Left ventricle myocardium superior (tissue), 1 donor: ENCODE measurements at regions of chr7 and their contacts with region 1.

Region 1: GRCh38 chr7:25093268-25093826 is 31.7 kb downstream of the CYCS start:
- DNase-seq: peak; percentile 85
- ATAC-seq: peak; percentile 90

Region 2: GRCh38 chr7:24812310-24812945 is 280.9 kb before region 1 on chr7:
- intact Hi-C with region 1: loop called (anchors 5 kb)
- DNase-seq: peak; percentile 53
- ATAC-seq: peak; percentile 74

Region 3: DNA sequence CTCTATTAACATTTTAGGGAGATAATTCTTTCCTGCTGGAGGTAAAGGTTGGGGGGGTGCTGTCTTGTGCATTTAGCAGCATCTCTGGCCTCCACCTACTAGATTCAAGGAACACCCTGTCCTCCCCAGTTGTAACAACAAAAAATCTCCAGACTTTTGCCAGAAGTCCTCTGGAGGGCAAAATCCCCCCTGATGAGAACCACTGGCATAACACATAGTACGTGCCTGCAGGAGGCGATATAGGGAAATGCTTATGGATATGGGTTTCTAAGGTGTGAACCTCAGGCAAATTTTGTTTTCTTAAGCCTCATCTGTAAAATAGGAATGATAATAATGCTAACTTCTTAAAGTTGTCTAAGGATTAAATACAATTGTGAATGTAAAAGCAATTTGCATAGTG is 110.4 kb before region 1 on chr7:
- intact Hi-C with region 1: no loop called
- DNase-seq: no peak
- ATAC-seq: no peak

Region 4: GRCh38 chr7:25216837-25217236 is 123.5 kb after region 1 on chr7:
- intact Hi-C with region 1: no loop called
- DNase-seq: no peak
- ATAC-seq: no peak